CD4-positive, alpha-beta memory T cell (primary cell): ENCODE measurements at regions of chr10 and their contacts with region 1.

Region 1: GRCh38 chr10:31759799-31760626 is 168.6 kb downstream of the ARHGAP12 start:
- DNase-seq: peak; percentile 92 to 99 (median 97)
- H3K4me3 ChIP-seq: peak overlapping the region; percentile 66 to 90
- H3K4me3 Mint-ChIP-seq: peak overlapping the region; percentile 75 to 92 (median 86)
- H3K27ac ChIP-seq: peak overlapping the region; percentile 78
- H3K27ac Mint-ChIP-seq: peak overlapping the region; percentile 94 to 99 (median 99)
- H3K4me1 ChIP-seq: peaks cover 10% of the 10 kb centered on the region
- H3K4me1 Mint-ChIP-seq: peaks cover 9 to 17% (median 13%) of the 10 kb centered on the region in 4 donors
- H3K27me3 ChIP-seq: no peaks in the 10 kb centered on the region
- H3K27me3 Mint-ChIP-seq: no peaks in the 10 kb centered on the region

Region 2: GRCh38 chr10:30348378-30348776 is 1411.6 kb before region 1 on chr10:
- CTCF ChIA-PET with region 1: no interaction called
- POLR2A ChIA-PET with region 1: no interaction called
- intact Hi-C with region 1: loop called (anchors 1 kb)
- DNase-seq: no peak
- H3K4me3 ChIP-seq: peak overlapping the region; percentile 82 to 96
- H3K4me3 Mint-ChIP-seq: peak overlapping the region; percentile 92 to 98 (median 94)
- H3K27ac ChIP-seq: peak overlapping the region; percentile 79
- H3K27ac Mint-ChIP-seq: peak overlapping the region; percentile 90 to 98 (median 94)
- H3K4me1 ChIP-seq: peaks cover 42% of the 10 kb centered on the region
- H3K4me1 Mint-ChIP-seq: peaks cover 35 to 60% (median 50%) of the 10 kb centered on the region in 4 donors
- H3K27me3 ChIP-seq: no peaks in the 10 kb centered on the region
- H3K27me3 Mint-ChIP-seq: no peaks in the 10 kb centered on the region

Region 3: GRCh38 chr10:30701451-30702173 is 1058.4 kb before region 1 on chr10:
- CTCF ChIA-PET with region 1: no interaction called
- POLR2A ChIA-PET with region 1: no interaction called
- intact Hi-C with region 1: loop called (anchors 5 kb)
- DNase-seq: peak; percentile 75 to 88 (median 78)
- H3K4me3 ChIP-seq: peak overlapping the region in 1 of 2 donors; percentile 28
- H3K4me3 Mint-ChIP-seq: peak overlapping the region; percentile 78 to 88 (median 84)
- H3K27ac ChIP-seq: peak overlapping the region; percentile 59
- H3K27ac Mint-ChIP-seq: peak overlapping the region; percentile 90 to 98 (median 95)
- H3K4me1 ChIP-seq: peaks cover 89% of the 10 kb centered on the region
- H3K4me1 Mint-ChIP-seq: peaks cover 53 to 90% (median 77%) of the 10 kb centered on the region in 4 donors
- H3K27me3 ChIP-seq: no peaks in the 10 kb centered on the region
- H3K27me3 Mint-ChIP-seq: no peaks in the 10 kb centered on the region

Region 4: GRCh38 chr10:31133628-31134302 is 626.2 kb before region 1 on chr10:
- CTCF ChIA-PET with region 1: no interaction called
- POLR2A ChIA-PET with region 1: no interaction called
- intact Hi-C with region 1: loop called (anchors 2 kb)
- DNase-seq: peak; percentile 37 to 60 (median 47)
- H3K4me3 ChIP-seq: peak overlapping the region in 1 of 2 donors; percentile 59
- H3K4me3 Mint-ChIP-seq: peak overlapping the region; percentile 61 to 85 (median 79)
- H3K27ac ChIP-seq: peak overlapping the region; percentile 45
- H3K27ac Mint-ChIP-seq: peak overlapping the region in 6 of 7 donors; percentile 17 to 72 (median 44)
- H3K4me1 ChIP-seq: peaks cover 37% of the 10 kb centered on the region
- H3K4me1 Mint-ChIP-seq: peaks cover 23 to 51% (median 35%) of the 10 kb centered on the region in 4 donors
- H3K27me3 ChIP-seq: no peaks in the 10 kb centered on the region
- H3K27me3 Mint-ChIP-seq: no peaks in the 10 kb centered on the region

Region 5: GRCh38 chr10:31578187-31578852 is 181.7 kb before region 1 on chr10:
- CTCF ChIA-PET with region 1: no interaction called
- POLR2A ChIA-PET with region 1: no interaction called
- intact Hi-C with region 1: no loop called
- DNase-seq: no peak
- H3K4me3 ChIP-seq: no peak overlapping the region
- H3K4me3 Mint-ChIP-seq: peak overlapping the region in 1 of 8 donors; percentile 6
- H3K27ac ChIP-seq: no peak overlapping the region
- H3K27ac Mint-ChIP-seq: peak overlapping the region in 2 of 7 donors; percentile 38 to 80
- H3K4me1 ChIP-seq: no peaks in the 10 kb centered on the region
- H3K4me1 Mint-ChIP-seq: peaks cover 0 to 5% (median 1%) of the 10 kb centered on the region in 4 donors
- H3K27me3 ChIP-seq: no peaks in the 10 kb centered on the region
- H3K27me3 Mint-ChIP-seq: peaks cover 0 to 5% of the 10 kb centered on the region in 2 donors

Region 6: DNA sequence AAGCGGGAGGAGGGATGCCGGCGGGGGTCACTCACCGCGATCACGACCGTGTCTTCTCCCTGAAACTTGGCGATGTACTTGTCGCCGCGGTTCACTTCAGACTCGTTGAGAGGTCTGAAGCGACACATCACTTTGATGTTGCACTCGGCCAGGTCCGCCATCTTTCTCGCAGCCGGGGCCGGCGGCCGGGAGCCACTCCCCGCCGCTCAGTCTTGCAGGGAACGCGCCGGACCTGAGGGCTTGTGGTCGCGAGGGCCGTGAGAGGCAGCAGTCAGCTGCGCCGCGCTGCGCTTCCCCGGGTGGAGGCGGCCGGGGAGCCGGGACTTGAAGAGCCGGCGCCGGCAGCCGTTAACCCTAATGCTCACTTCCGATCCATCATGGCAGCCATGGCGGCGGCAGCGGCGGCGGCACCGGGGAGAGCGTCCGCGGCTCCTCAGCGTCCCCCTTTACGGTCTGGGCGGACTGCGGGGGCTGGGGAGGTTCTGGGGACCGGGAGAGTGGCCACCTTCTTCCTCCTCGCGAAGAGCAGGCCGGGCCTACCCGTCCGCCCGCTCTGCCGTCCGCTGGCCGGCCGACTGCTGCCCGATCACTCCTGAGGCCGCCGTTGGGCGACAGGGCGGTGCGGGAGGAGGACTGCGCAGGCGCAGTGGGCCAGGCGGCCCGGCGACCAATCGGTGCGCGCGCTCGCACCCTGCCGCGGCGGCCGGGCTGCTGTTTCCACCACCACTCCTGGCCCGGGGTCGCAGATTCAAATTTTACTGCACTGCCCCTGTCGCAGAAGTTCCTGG is 296.0 kb after region 1 on chr10 and contains the start of gene KIF5B:
- CTCF ChIA-PET with region 1: no interaction called
- POLR2A ChIA-PET with region 1: interaction called, 3 read pairs
- intact Hi-C with region 1: loop called (anchors 2 kb)
- DNase-seq: peak; percentile 81 to 92 (median 88)
- H3K4me3 ChIP-seq: peak within 1 kb of the TSS; percentile 88 to 93
- H3K4me3 Mint-ChIP-seq: peak within 1 kb of the TSS; percentile 95 to 99 (median 98)
- H3K27ac ChIP-seq: peak within 1 kb of the TSS; percentile 81
- H3K27ac Mint-ChIP-seq: peak within 1 kb of the TSS; percentile 94 to 97 (median 95)
- H3K4me1 ChIP-seq: peaks cover 49% of the 10 kb centered on the region
- H3K4me1 Mint-ChIP-seq: peaks cover 30 to 54% (median 44%) of the 10 kb centered on the region in 4 donors
- H3K27me3 ChIP-seq: no peaks in the 10 kb centered on the region
- H3K27me3 Mint-ChIP-seq: no peaks in the 10 kb centered on the region
- total RNA-seq, gene KIF5B: 54.8 to 55.6 TPM